ENCODE measurements at regions of chr9 and their contacts with region 1.

Region 1: GRCh38 chr9:116661037-116661954 is 25.8 kb upstream of the TRIM32 start:
- DNase-seq: peak; percentile 55
- H3K4me3 ChIP-seq: no peak overlapping the region
- H3K27ac ChIP-seq: no peak overlapping the region
- H3K4me1 ChIP-seq: no peaks in the 10 kb centered on the region
- CTCF ChIP-seq: peak; percentile 83

Region 2: DNA sequence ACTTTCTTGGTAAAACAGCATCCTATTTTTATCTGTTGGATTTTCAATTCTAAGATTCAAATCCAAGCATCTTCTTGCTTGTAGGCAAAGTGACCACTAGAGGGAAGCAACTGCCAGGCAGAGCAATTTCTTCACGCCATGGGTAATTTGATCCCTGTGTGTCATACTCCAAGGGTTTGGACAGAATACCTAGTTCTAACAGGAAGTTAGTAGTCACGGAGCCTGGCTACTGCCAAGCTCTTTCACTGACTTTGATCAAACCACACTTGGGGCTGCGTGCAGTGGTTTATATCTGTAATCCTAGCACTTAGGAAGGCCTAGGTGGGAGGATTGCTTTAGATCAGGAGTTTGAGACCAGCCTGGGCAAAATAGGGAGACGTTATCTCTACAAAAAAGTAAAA is 1069.7 kb before region 1 on chr9:
- CTCF ChIA-PET with region 1: no interaction called
- POLR2A ChIA-PET with region 1: no interaction called
- intact Hi-C with region 1: loop called (anchors 5 kb)
- DNase-seq: peak; percentile 45
- H3K4me3 ChIP-seq: no peak overlapping the region
- H3K27ac ChIP-seq: no peak overlapping the region
- H3K4me1 ChIP-seq: no peaks in the 10 kb centered on the region
- CTCF ChIP-seq: peak; percentile 80

Region 3: GRCh38 chr9:116096853-116097252 is 564.4 kb before region 1 on chr9:
- CTCF ChIA-PET with region 1: no interaction called
- POLR2A ChIA-PET with region 1: no interaction called
- intact Hi-C with region 1: loop called (anchors 5 kb)
- DNase-seq: no peak
- H3K4me3 ChIP-seq: no peak overlapping the region
- H3K27ac ChIP-seq: no peak overlapping the region
- H3K4me1 ChIP-seq: no peaks in the 10 kb centered on the region
- CTCF ChIP-seq: no peak

Region 4: GRCh38 chr9:116156621-116157314 is 504.5 kb before region 1 on chr9:
- CTCF ChIA-PET with region 1: no interaction called
- POLR2A ChIA-PET with region 1: no interaction called
- intact Hi-C with region 1: loop called (anchors 5 kb)
- DNase-seq: no peak
- H3K4me3 ChIP-seq: no peak overlapping the region
- H3K27ac ChIP-seq: no peak overlapping the region
- H3K4me1 ChIP-seq: no peaks in the 10 kb centered on the region
- CTCF ChIP-seq: no peak

Region 5: DNA sequence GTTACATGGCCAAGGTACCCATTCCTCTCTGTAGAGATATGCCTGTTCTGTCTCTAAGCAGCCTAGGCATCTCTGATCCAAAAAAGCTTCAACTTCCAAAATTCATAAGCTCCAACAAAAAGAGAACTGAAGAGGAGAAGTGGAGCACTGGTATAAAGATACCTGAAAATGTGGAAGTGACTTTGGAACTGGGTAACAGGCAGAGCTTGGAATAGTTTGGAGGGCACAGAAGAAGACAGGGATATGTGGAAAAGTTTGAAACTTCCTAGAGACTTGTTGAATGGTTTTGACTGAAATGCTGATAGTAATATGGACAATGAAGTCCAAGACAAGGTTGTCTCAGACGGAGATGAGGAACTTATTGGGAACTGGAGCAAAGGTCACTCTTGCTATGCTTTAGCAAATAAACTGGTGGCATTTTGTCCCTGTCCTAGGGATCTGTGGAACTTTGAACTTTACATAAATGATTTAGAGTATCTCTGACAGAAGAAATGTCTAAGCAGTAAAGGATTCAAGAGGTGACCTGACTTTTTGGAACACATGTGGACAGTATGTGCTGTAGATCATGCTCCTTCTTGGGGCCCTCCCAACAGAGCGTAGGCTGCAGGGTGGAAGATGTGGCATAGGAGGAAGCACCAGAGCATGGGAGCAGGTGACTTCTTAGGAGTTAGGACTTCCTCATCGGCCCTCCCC is 136.4 kb before region 1 on chr9:
- CTCF ChIA-PET with region 1: no interaction called
- POLR2A ChIA-PET with region 1: no interaction called
- intact Hi-C with region 1: no loop called
- DNase-seq: no peak
- H3K4me3 ChIP-seq: no peak overlapping the region
- H3K27ac ChIP-seq: no peak overlapping the region
- H3K4me1 ChIP-seq: no peaks in the 10 kb centered on the region
- CTCF ChIP-seq: no peak

Region 6: DNA sequence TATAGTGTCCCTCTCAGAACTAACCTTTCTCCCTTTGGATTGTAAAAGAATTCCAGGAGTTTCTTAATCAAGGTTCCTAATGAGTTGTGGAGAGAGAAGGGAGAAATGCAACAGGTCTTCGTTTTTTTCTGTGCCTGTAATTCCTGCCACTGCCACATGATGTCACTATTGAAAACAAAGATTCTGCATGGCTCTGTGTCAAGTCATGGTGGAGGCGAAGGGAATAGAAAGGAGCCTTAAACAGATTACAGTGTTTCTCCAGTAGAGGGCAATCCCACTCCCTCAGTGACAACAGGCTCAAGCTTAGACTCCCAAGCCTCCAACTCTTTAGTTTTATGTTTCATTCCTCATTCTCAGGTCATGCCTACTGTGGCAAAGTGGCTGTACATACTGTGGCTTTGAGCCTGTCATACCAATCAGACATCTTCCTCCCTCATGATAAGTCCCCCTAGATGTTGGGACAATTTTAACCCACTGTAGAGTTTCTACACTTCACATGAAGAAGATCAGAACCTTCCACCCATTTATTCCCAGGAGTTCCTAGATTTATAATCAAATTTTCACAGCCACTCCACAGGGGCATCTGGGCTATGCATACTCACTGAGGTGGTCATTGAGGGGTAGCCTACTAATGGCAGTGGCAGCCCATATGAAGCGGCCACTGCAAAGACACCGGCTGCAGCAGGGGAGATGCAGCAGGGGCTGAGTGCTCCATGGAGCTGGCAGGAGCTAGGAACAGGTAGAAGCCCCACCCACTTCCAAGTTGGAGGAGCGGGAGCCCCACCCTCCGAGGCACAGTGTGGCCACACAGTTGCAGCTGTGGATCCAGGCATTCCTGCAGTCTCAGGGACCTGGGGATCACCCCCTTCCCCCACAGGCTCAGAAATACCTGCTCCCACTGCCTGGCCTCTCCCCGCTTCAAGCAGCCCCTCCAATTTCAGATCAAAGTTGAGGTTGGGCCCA is 71.6 kb before region 1 on chr9:
- CTCF ChIA-PET with region 1: interaction called, 3 read pairs
- POLR2A ChIA-PET with region 1: no interaction called
- intact Hi-C with region 1: loop called (anchors 1 kb)
- DNase-seq: peak; percentile 27
- H3K4me3 ChIP-seq: no peak overlapping the region
- H3K27ac ChIP-seq: no peak overlapping the region
- H3K4me1 ChIP-seq: no peaks in the 10 kb centered on the region
- CTCF ChIP-seq: peak; percentile 86

Region 7: GRCh38 chr9:116817762-116818161 is 156.5 kb after region 1 on chr9:
- CTCF ChIA-PET with region 1: no interaction called
- POLR2A ChIA-PET with region 1: no interaction called
- intact Hi-C with region 1: no loop called
- DNase-seq: no peak
- H3K4me3 ChIP-seq: no peak overlapping the region
- H3K27ac ChIP-seq: no peak overlapping the region
- H3K4me1 ChIP-seq: no peaks in the 10 kb centered on the region
- CTCF ChIP-seq: no peak

Measured in OCI-LY7 (cell line).